Heart left ventricle (tissue), 16 donors: ENCODE measurements at regions of chr1 and their contacts with region 1.

Region 1: GRCh38 chr1:151156515-151156819 is at the start of gene TNFAIP8L2:
- DNase-seq: peak in 4 of 5 donors; percentile 52 to 61 (median 58)
- ATAC-seq: peak; percentile 45 to 76 (median 60)
- H3K4me3 ChIP-seq: peak within 1 kb of the TSS in 9 of 12 donors; percentile 0 to 71 (median 39)
- H3K27ac ChIP-seq: peak within 1 kb of the TSS in 5 of 12 donors; percentile 26 to 94 (median 39)
- H3K4me1 ChIP-seq: peaks cover 0 to 40% (median 6%) of the 10 kb centered on the region in 12 donors
- H3K27me3 ChIP-seq: no peaks in the 10 kb centered on the region
- CTCF ChIP-seq: no peak
- POLR2A ChIP-seq: no peak
- total RNA-seq, gene TNFAIP8L2: 0.49 to 7.9 (median 1.3) TPM

Region 2: DNA sequence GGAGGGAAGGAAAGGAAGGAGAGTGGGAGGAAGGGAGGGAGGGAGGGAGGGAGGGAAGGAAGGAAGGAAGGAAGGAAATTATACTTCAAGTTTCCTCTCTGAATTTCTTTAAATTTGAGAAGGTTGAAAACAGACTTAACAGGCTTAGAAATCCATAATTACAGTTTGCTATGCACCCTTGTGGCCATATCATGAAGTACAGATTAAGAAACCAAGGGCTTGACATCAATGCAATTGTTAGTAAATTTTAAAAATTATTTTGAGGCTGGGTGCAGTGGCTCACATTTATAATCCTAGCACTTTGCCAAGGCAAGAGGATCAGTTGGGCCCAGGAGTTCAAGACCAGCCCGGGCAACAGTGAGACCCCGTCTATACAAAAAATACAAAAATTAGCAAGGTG is 934.9 kb before region 1 on chr1:
- intact Hi-C with region 1: loop called in 1 of 10 experiments (anchors 10 kb)
- DNase-seq: no peak
- ATAC-seq: no peak
- H3K4me3 ChIP-seq: no peak overlapping the region
- H3K27ac ChIP-seq: no peak overlapping the region
- H3K4me1 ChIP-seq: no peaks in the 10 kb centered on the region
- H3K27me3 ChIP-seq: no peaks in the 10 kb centered on the region
- CTCF ChIP-seq: peak in 11 of 12 donors; percentile 27 to 54 (median 39)
- POLR2A ChIP-seq: no peak

Region 3: GRCh38 chr1:150981696-150982386 is 174.6 kb before region 1 on chr1 and contains the start of gene ANXA9:
- intact Hi-C with region 1: no loop called
- DNase-seq: no peak
- ATAC-seq: no peak
- H3K4me3 ChIP-seq: no peak within 1 kb of the TSS
- H3K27ac ChIP-seq: no peak within 1 kb of the TSS
- H3K4me1 ChIP-seq: peaks cover 0 to 31% (median 7%) of the 10 kb centered on the region in 12 donors
- H3K27me3 ChIP-seq: no peaks in the 10 kb centered on the region
- CTCF ChIP-seq: no peak
- POLR2A ChIP-seq: no peak
- total RNA-seq, gene ANXA9: 0.12 to 2.0 (median 0.35) TPM in 4 of 9 donors, not detected in the others

Region 4: DNA sequence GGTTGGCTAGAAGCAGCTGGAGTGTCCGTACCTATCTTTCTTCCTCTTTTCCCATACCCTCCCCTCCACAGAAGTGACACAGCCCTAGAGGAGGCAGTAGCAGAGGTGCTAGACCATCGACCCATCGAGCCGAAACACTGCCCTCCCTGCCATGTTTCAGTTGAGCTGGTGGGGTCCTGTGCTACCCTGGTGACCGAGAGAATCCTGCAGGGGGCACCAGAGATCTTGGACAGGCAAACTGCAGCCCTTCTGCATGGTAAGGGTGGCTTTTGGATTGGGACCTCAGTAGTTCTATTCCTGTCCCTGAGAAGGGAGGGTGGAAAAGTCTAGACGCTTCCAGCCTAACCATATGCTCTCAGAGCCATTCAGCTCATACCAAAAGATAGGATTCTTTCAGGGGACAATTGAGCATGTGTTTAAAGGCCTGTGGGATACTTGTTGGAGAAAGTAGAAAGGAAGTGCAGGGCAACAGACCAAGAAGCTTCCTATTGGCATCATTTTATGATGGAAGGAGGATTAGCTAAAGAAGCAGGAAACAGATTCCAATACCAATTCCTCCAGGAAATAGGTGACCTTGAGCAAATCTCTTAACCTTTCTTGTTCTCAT is 131.8 kb before region 1 on chr1:
- intact Hi-C with region 1: loop called in 7 of 10 experiments (anchors 5 to 10 kb)
- DNase-seq: peak; percentile 85 to 90 (median 87)
- ATAC-seq: peak; percentile 88 to 95 (median 90)
- H3K4me3 ChIP-seq: no peak overlapping the region
- H3K27ac ChIP-seq: peak overlapping the region; percentile 37 to 87 (median 79)
- H3K4me1 ChIP-seq: peaks cover 0 to 30% (median 8%) of the 10 kb centered on the region in 12 donors
- H3K27me3 ChIP-seq: no peaks in the 10 kb centered on the region
- CTCF ChIP-seq: peak; percentile 63 to 84 (median 77)
- POLR2A ChIP-seq: no peak

Region 5: DNA sequence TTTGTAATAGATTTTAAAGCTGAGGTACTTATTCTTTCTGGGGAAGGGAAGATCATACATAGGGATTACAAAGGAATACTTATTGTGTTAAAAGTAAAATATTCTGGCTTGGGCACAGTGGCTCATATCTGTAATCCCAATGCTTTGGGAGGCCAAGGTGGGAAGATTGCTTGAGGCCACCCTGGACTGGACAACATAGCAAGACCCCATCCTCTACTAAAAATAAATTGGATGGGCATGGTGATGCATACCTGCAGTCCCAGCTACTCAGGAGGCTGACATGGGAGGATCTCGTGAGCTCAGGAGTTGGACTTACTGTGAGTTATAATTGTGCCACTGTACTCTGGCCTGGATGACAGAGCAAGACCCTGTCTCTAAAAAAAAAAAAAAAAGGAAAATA is 58.3 kb before region 1 on chr1:
- intact Hi-C with region 1: loop called (anchors 1 to 5 kb)
- DNase-seq: no peak
- ATAC-seq: no peak
- H3K4me3 ChIP-seq: no peak overlapping the region
- H3K27ac ChIP-seq: no peak overlapping the region
- H3K4me1 ChIP-seq: no peaks in the 10 kb centered on the region
- H3K27me3 ChIP-seq: no peaks in the 10 kb centered on the region
- CTCF ChIP-seq: no peak
- POLR2A ChIP-seq: no peak

Region 6: GRCh38 chr1:151106894-151107293 is 49.6 kb before region 1 on chr1:
- intact Hi-C with region 1: loop called in 3 of 10 experiments (anchors 2 to 5 kb)
- DNase-seq: no peak
- ATAC-seq: no peak
- H3K4me3 ChIP-seq: no peak overlapping the region
- H3K27ac ChIP-seq: no peak overlapping the region
- H3K4me1 ChIP-seq: no peaks in the 10 kb centered on the region
- H3K27me3 ChIP-seq: no peaks in the 10 kb centered on the region
- CTCF ChIP-seq: no peak
- POLR2A ChIP-seq: no peak

Region 7: GRCh38 chr1:151124763-151125403 is 31.6 kb before region 1 on chr1:
- intact Hi-C with region 1: loop called in 1 of 10 experiments (anchors 5 kb)
- DNase-seq: no peak
- ATAC-seq: no peak
- H3K4me3 ChIP-seq: no peak overlapping the region
- H3K27ac ChIP-seq: no peak overlapping the region
- H3K4me1 ChIP-seq: peaks cover 0 to 4% (median 0%) of the 10 kb centered on the region in 12 donors
- H3K27me3 ChIP-seq: no peaks in the 10 kb centered on the region
- CTCF ChIP-seq: no peak
- POLR2A ChIP-seq: no peak